ENCODE measurements at regions of chr5 and their contacts with region 1.

Region 1: DNA sequence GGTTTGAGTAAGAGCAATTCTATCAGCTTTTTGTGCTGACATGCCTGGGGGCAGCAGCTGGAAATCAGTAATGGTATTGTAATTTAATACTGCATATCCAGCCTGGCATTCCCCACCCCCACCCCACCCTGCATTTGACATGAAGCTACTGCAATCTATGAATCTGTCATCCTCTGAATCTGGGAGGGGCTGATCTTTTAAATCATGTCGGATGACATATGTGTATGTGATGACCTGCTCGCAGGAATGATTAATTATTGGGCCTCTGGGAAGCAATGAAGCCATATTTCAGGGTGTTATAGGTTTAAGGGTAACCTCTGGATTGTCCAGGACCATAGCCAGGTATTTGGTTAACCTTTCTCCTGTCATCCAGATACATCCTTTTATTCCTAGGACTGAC is 64.6 kb upstream of the RASGRF2 start:
- DNase-seq: no peak
- ATAC-seq: no peak
- H3K4me3 ChIP-seq: no peak overlapping the region
- H3K27ac ChIP-seq: no peak overlapping the region
- H3K4me1 ChIP-seq: no peaks in the 10 kb centered on the region
- H3K27me3 ChIP-seq: no peaks in the 10 kb centered on the region
- CTCF ChIP-seq: no peak
- POLR2A ChIP-seq: no peak
- RAD21 ChIP-seq: no peak

Region 2: DNA sequence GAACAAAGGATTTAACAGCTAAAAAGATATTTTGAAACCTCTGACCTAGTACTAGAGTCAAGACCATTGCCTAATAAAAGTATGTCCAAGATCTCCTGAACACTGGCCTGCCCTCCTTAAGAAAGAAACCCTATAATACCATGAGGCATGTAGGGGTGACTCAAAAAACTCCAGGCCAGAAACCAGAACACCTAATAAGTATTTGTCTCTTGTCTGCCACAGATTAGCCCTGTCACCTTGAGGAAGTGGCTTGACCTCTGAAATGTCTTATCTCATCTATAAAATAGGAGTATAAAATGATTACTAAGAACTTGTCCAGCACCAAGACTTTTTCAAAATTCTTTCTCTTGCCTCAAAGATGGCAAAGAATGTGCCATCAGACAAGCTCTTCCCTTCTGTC is 60.8 kb before region 1 on chr5:
- CTCF ChIA-PET with region 1: no interaction called
- POLR2A ChIA-PET with region 1: no interaction called
- RAD21 ChIA-PET with region 1: no interaction called
- intact Hi-C with region 1: no loop called
- DNase-seq: no peak
- ATAC-seq: no peak
- H3K4me3 ChIP-seq: no peak overlapping the region
- H3K27ac ChIP-seq: no peak overlapping the region
- H3K4me1 ChIP-seq: no peaks in the 10 kb centered on the region
- H3K27me3 ChIP-seq: no peaks in the 10 kb centered on the region
- CTCF ChIP-seq: no peak
- POLR2A ChIP-seq: no peak
- RAD21 ChIP-seq: no peak

Region 3: DNA sequence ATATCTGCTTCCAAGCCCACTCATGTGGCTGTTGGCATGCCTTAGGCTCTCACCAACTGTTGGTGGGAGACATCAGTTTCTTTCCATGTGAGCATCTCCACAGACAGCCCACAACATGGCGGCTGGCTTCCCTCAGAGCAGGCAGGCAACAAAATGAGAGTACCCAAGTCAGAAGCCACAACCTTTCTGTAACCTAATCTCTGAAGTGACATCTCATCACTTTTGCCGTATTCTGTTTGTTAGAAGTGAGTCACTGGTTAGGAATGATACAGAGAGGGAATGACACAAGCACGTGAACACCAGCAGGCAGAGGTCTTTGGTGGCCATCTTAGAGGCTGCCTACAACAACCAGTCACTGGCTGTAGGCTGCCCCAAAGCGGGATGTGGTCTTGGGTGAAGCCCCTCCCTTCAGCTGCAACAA is 24.0 kb before region 1 on chr5:
- CTCF ChIA-PET with region 1: no interaction called
- POLR2A ChIA-PET with region 1: no interaction called
- RAD21 ChIA-PET with region 1: no interaction called
- intact Hi-C with region 1: loop called (anchors 1 kb)
- DNase-seq: peak; percentile 45
- ATAC-seq: peak; percentile 78
- H3K4me3 ChIP-seq: no peak overlapping the region
- H3K27ac ChIP-seq: no peak overlapping the region
- H3K4me1 ChIP-seq: peaks cover 7 to 13% of the 10 kb centered on the region in 2 experiments
- H3K27me3 ChIP-seq: no peaks in the 10 kb centered on the region
- CTCF ChIP-seq: no peak
- POLR2A ChIP-seq: no peak
- RAD21 ChIP-seq: no peak

Measured in HCT116 (cell line).